Common myeloid progenitor, CD34-positive (primary cell): ENCODE measurements at regions of chr1 and their contacts with region 1.

Region 1: GRCh38 chr1:154760469-154760933 is 109.6 kb downstream of the KCNN3 start:
- DNase-seq: peak; percentile 55 to 71 (median 63)
- H3K4me3 ChIP-seq: peak overlapping the region; percentile 19 to 66 (median 43)
- H3K27ac ChIP-seq: no peak overlapping the region
- H3K4me1 ChIP-seq: peaks cover 2 to 19% (median 14%) of the 10 kb centered on the region in 4 experiments
- H3K27me3 ChIP-seq: peaks cover 0 to 23% (median 3%) of the 10 kb centered on the region in 5 experiments

Region 2: GRCh38 chr1:154657556-154657955 is 102.9 kb before region 1 on chr1:
- CTCF ChIA-PET with region 1: no interaction called
- POLR2A ChIA-PET with region 1: no interaction called
- DNase-seq: peak in 2 of 3 donors; percentile 48 to 60
- H3K4me3 ChIP-seq: no peak overlapping the region
- H3K27ac ChIP-seq: no peak overlapping the region
- H3K4me1 ChIP-seq: peaks cover 0 to 6% (median 0%) of the 10 kb centered on the region in 4 experiments
- H3K27me3 ChIP-seq: no peaks in the 10 kb centered on the region

Region 3: GRCh38 chr1:154720328-154721297 is 39.9 kb before region 1 on chr1:
- CTCF ChIA-PET with region 1: interaction called, 12 read pairs
- POLR2A ChIA-PET with region 1: interaction called, 8 read pairs
- DNase-seq: peak; percentile 29 to 80 (median 68)
- H3K4me3 ChIP-seq: peak overlapping the region in 2 of 7 experiments; percentile 23 to 30
- H3K27ac ChIP-seq: no peak overlapping the region
- H3K4me1 ChIP-seq: peaks cover 2 to 35% (median 12%) of the 10 kb centered on the region in 4 experiments
- H3K27me3 ChIP-seq: peaks cover 0 to 2% (median 0%) of the 10 kb centered on the region in 5 experiments

Region 4: DNA sequence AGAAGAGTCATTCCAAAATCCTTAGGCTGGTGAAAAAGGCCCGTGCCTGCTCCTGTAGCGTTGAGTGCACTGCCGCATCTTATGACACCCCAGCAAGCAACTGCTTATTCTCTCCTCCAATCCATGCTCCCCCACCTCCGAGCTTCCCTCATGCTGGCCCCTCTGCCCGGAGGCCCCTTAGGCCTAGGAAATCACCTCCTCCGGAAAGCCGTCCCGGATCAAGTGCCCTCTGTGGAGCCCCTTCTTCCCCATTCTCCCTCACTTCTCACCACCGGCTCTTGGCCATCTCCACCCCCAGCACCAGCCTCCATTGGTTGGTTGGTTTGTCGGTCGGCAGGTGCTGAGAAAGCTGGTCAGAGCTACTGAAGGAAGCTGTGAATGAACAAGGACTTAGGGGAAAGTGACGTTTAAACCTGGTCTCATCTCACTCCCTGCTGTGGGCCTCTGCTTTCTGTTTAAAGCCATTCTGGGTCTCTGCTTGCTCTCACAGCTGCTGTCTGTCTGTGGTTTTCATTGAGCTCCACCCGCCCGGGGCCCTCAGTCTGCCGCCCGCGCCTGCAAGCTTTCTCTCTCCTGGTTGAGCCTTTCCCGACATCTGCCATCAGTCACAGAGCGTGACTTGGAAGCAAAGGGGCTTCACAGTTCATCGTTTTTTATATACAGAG is 12.6 kb before region 1 on chr1:
- CTCF ChIA-PET with region 1: interaction called, 16 read pairs
- POLR2A ChIA-PET with region 1: no interaction called
- DNase-seq: peak; percentile 39 to 79 (median 77)
- H3K4me3 ChIP-seq: peak overlapping the region in 5 of 7 experiments; percentile 4 to 54 (median 43)
- H3K27ac ChIP-seq: no peak overlapping the region
- H3K4me1 ChIP-seq: peaks cover 5 to 41% (median 28%) of the 10 kb centered on the region in 4 experiments
- H3K27me3 ChIP-seq: no peaks in the 10 kb centered on the region